ENCODE measurements at regions of chr4 and their contacts with region 1.

Region 1: GRCh38 chr4:186392026-186392425 is 126.0 kb downstream of the F11 start:
- DNase-seq: peak; percentile 31
- H3K4me3 ChIP-seq: no peak overlapping the region
- H3K27ac ChIP-seq: no peak overlapping the region
- H3K4me1 ChIP-seq: no peaks in the 10 kb centered on the region
- H3K27me3 ChIP-seq: no peaks in the 10 kb centered on the region
- CTCF ChIP-seq: no peak

Region 2: GRCh38 chr4:186481998-186482790 is 90.2 kb after region 1 on chr4:
- CTCF ChIA-PET with region 1: no interaction called
- dilution Hi-C with region 1: loop called (anchors 5 kb)
- in situ Hi-C with region 1: no loop called
- intact Hi-C with region 1: no loop called
- DNase-seq: no peak
- H3K4me3 ChIP-seq: no peak overlapping the region
- H3K27ac ChIP-seq: no peak overlapping the region
- H3K4me1 ChIP-seq: peaks cover 2% of the 10 kb centered on the region
- H3K27me3 ChIP-seq: peaks cover 3% of the 10 kb centered on the region
- CTCF ChIP-seq: no peak